ENCODE measurements at regions of chr1 and their contacts with region 1.

Region 1: DNA sequence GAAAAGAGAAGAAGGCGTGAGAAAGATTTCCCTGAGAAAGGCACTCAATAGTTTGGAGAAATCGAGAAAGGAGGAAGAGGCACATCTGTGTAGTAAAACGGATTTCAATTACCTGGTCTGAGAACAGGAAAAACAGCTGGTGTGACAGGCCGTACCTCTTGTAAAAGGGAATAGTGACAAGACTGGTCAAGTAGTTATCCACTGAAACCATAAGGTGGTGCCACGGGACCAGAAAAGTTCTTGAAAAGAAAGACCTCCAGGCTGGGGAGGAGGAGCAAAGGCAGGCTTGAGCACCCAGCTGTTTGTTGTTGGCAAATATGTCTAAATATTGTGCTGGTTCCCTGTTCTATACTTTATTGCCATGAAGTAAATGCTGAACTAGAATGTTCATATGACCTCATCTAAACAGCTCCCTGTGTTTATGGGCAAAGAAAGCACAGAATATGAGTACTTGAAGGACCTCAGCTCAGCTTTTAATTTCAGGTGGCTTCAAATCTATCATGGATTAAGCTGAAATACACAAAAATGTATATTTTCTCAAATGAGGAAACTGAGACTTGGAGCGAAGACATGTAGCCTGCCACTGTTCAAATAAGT is 4.0 kb downstream of the HAO2 start:
- DNase-seq: no peak
- H3K4me3 ChIP-seq: no peak overlapping the region
- H3K27ac ChIP-seq: no peak overlapping the region
- H3K4me1 ChIP-seq: no peaks in the 10 kb centered on the region
- H3K27me3 ChIP-seq: no peaks in the 10 kb centered on the region
- CTCF ChIP-seq: no peak
- EP300 ChIP-seq: no peak
- POLR2A ChIP-seq: no peak

Region 2: GRCh38 chr1:118151312-118151937 is 1221.2 kb before region 1 on chr1:
- intact Hi-C with region 1: loop called in 1 of 4 experiments (anchors 5 kb)
- DNase-seq: peak in 4 of 5 donors; percentile 24 to 42 (median 25)
- H3K4me3 ChIP-seq: no peak overlapping the region
- H3K27ac ChIP-seq: no peak overlapping the region
- H3K4me1 ChIP-seq: no peaks in the 10 kb centered on the region
- H3K27me3 ChIP-seq: no peaks in the 10 kb centered on the region
- CTCF ChIP-seq: peak in 1 of 3 donors; percentile 42
- EP300 ChIP-seq: no peak
- POLR2A ChIP-seq: no peak

Region 3: GRCh38 chr1:119275145-119276134 is 97.1 kb before region 1 on chr1:
- intact Hi-C with region 1: loop called in 2 of 4 experiments (anchors 5 to 10 kb)
- DNase-seq: peak in 4 of 5 donors; percentile 21 to 52 (median 39)
- H3K4me3 ChIP-seq: no peak overlapping the region
- H3K27ac ChIP-seq: no peak overlapping the region
- H3K4me1 ChIP-seq: peaks cover 3% of the 10 kb centered on the region
- H3K27me3 ChIP-seq: no peaks in the 10 kb centered on the region
- CTCF ChIP-seq: peak in 2 of 3 donors; percentile 36 to 45
- EP300 ChIP-seq: no peak
- POLR2A ChIP-seq: no peak